ENCODE measurements at regions of chrX and their contacts with region 1.

Region 1: GRCh38 chrX:136496770-136497598 is at the start of gene HTATSF1:
- DNase-seq: peak; percentile 88
- H3K4me3 ChIP-seq: peak within 1 kb of the TSS; percentile 92
- H3K27ac ChIP-seq: peak within 1 kb of the TSS; percentile 90
- H3K4me1 ChIP-seq: peaks cover 18% of the 10 kb centered on the region
- CTCF ChIP-seq: no peak
- total RNA-seq, gene HTATSF1: 58.1 and 68.6 TPM in 2 replicates

Region 2: DNA sequence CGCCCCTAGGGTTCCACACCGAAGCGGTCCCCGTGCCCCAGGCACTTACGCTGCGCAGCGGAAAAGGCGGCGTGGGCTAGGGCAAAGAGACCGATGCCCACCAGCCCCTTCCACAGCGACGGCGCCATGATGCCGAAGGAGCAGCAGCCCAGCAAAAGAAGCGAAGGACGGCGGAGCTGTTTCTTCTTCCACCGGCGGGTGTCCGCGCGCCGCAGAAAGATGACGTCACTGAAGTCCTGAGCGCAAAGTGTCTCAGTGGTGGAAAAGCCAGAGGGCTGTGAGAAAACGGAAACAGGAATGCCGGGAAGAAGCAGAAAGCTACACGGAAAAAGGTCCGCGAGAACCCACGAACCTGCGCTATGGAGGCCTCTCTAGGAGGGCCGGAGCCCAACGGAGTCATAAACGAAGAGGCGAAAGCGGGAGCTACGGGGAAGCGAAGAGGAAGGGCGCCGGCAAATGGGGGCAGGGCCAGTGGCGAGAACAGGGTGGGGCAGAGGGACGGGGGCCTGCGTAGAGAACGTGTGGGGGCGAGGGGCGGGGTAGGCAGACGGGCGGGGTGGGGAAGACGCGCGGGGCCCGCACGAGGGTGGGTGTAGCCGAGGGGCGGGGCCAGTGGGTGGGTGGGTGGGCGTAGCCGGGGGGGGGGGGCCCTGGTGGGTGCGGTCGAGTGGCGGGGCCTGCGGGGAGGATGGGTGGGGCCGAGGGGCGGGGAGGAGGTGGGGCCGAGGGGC is 523.3 kb before region 1 on chrX and contains the start of gene MMGT1:
- CTCF ChIA-PET with region 1: no interaction called
- POLR2A ChIA-PET with region 1: no interaction called
- intact Hi-C with region 1: loop called (anchors 5 kb)
- DNase-seq: peak; percentile 85
- H3K4me3 ChIP-seq: peak within 1 kb of the TSS; percentile 96
- H3K27ac ChIP-seq: peak within 1 kb of the TSS; percentile 53
- H3K4me1 ChIP-seq: peaks cover 22% of the 10 kb centered on the region
- CTCF ChIP-seq: no peak
- total RNA-seq, gene MMGT1: 7.7 and 8.9 TPM in 2 replicates

Region 3: DNA sequence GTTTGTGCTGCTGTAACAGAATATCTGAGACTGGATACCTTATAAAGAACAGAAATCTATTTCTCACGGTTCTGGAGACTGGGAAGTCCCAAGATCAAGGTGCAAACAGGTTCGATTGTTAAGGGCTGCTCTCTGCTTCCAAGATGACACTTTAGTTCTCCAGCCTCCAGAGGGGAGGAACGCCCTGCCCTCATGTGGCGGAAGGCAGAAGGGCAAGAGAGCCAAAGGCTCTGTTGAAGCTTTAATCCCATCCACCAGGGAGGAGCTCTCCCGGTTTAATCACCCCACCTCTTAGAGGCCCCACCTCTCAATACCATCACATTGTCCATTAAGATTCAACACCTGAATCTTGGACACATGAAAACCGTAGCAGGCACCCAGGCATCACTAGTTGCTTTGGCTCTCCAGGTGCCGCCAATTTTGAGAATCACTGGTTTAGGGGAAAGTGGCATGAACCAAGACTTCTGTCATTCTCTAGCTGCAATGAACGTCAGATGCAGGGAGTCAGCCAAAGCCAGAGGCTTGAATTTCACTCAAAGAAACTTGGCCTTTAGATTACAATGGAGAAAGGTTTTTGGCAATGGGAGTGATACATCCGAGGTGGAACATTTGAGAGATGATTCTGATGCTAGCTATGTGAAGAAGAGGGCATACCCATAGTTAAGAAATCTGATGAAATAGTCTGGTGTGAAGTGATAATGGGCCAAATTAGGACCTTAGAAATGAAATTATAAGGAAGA is 334.0 kb before region 1 on chrX:
- CTCF ChIA-PET with region 1: no interaction called
- POLR2A ChIA-PET with region 1: no interaction called
- intact Hi-C with region 1: loop called (anchors 5 kb)
- DNase-seq: peak; percentile 42
- H3K4me3 ChIP-seq: no peak overlapping the region
- H3K27ac ChIP-seq: no peak overlapping the region
- H3K4me1 ChIP-seq: peaks cover 1% of the 10 kb centered on the region
- CTCF ChIP-seq: peak; percentile 74

Region 4: GRCh38 chrX:136268051-136269048 is 228.6 kb before region 1 on chrX:
- CTCF ChIA-PET with region 1: no interaction called
- POLR2A ChIA-PET with region 1: no interaction called
- intact Hi-C with region 1: loop called (anchors 10 kb)
- DNase-seq: peak; percentile 63
- H3K4me3 ChIP-seq: no peak overlapping the region
- H3K27ac ChIP-seq: no peak overlapping the region
- H3K4me1 ChIP-seq: peaks cover 33% of the 10 kb centered on the region
- CTCF ChIP-seq: peak; percentile 84

Region 5: GRCh38 chrX:136725446-136726104 is 228.6 kb after region 1 on chrX:
- CTCF ChIA-PET with region 1: no interaction called
- POLR2A ChIA-PET with region 1: no interaction called
- intact Hi-C with region 1: no loop called
- DNase-seq: no peak
- H3K4me3 ChIP-seq: no peak overlapping the region
- H3K27ac ChIP-seq: no peak overlapping the region
- H3K4me1 ChIP-seq: peaks cover 6% of the 10 kb centered on the region
- CTCF ChIP-seq: no peak

Region 6: DNA sequence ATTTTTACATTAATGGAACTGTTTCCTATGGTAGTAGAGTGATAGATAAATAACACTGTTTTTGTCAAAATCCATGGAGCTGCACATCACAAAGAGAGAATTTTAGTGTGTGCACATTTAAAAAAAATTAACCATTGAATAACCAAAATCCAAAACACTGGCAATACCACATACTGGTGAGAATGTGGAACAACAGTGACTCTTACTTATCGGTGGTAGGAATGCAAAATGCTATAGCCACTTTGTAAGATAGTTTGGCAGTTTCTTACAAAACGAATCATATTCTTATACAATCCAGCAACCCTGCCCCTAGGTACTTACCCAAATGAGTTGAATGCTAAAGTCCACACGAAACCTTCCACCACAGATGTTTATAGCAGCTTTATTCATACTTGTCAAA is 766.4 kb after region 1 on chrX:
- CTCF ChIA-PET with region 1: no interaction called
- POLR2A ChIA-PET with region 1: no interaction called
- intact Hi-C with region 1: no loop called
- DNase-seq: no peak
- H3K4me3 ChIP-seq: no peak overlapping the region
- H3K27ac ChIP-seq: no peak overlapping the region
- H3K4me1 ChIP-seq: no peaks in the 10 kb centered on the region
- CTCF ChIP-seq: no peak